ENCODE measurements at regions of chr14 and their contacts with region 1.

Region 1: GRCh38 chr14:30270200-30271161 is 288.5 kb upstream of the G2E3 start:
- DNase-seq: peak; percentile 55
- ATAC-seq: peak; percentile 99
- H3K4me3 ChIP-seq: no peak overlapping the region
- H3K27ac ChIP-seq: no peak overlapping the region
- H3K4me1 ChIP-seq: no peaks in the 10 kb centered on the region
- H3K27me3 ChIP-seq: no peaks in the 10 kb centered on the region
- CTCF ChIP-seq: peak in 2 of 3 experiments; percentile 85 to 93; a peak in 4 of 6 replicates
- POLR2A ChIP-seq: no peak
- RAD21 ChIP-seq: peak; percentile 34; the same call in 1 of the 2 replicates

Region 2: DNA sequence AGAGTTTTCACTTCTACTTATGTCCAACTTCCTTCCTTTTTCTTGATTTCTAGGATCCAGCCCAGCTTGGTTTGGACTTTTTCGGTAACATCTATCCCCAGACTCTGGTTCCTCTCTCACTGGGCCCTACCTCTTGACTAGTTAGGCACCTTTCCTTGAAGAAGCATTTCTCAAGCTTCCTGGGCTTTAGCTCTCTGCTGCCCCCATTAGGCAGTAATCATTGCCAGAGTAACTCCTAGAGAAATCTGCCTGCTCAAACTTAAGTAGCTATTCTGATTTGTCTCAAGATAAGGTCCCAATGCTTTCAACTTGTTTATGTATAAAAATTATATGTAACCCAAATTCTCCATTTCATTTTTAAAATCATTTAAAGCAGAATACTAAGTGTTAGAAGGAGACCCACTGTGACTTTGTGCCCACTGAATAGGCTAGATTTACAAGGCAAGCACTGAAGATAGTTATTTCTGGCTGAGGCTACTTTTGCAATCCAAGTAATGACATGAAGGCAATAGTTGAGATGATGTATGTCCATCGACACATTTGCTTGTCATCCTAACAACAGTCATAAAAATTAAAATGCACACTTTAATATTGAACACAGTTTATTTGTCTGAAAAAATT is 13.5 kb after region 1 on chr14:
- CTCF ChIA-PET with region 1: interaction called, 70 read pairs
- POLR2A ChIA-PET with region 1: interaction called, 3 read pairs
- RAD21 ChIA-PET with region 1: no interaction called
- intact Hi-C with region 1: no loop called
- DNase-seq: peak; percentile 19
- ATAC-seq: peak; percentile 68
- H3K4me3 ChIP-seq: no peak overlapping the region
- H3K27ac ChIP-seq: no peak overlapping the region
- H3K4me1 ChIP-seq: no peaks in the 10 kb centered on the region
- H3K27me3 ChIP-seq: no peaks in the 10 kb centered on the region
- CTCF ChIP-seq: peak; percentile 6 to 84 (median 74); a peak in 4 of 6 replicates
- POLR2A ChIP-seq: no peak
- RAD21 ChIP-seq: peak; percentile 27; the same call in 1 of the 2 replicates

Region 3: DNA sequence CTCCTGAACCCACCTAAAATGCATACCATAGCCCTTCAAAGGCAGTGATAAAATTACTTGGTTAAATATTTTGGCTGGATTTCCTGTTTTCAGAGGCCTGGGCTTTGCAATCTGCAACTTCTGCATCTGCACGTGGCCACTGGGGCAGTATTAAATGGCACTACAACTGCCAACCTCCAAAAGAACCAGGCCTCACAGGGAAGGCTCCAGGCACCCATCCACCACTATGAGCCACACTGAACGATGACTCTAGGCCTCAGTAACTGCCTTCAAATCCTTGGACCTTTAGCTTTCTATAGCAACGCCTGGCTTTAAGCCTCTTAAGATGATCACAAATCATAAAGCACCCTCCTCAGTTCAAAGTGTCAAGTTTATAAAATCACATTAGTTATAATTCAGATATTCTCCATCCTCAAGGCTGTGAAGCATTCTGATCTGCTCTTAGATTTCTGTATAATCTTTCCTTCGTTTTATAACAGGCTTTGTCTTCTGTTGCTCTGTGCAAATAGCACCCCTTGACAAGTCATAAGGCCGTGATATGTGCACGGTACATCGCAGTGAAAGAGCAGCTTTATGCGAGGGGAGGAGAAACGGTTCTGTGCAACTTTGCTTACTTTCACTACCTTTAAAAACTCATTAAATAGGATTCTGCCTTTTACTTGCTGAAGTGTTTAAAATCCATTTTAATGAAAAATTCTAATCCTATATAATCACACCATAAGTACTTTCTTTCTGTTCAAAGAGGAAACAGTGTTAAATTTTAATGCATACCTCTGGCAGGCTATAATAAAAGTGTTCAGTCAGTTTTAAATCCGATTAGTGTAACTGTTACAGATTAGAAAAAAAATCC is 92.1 kb after region 1 on chr14:
- CTCF ChIA-PET with region 1: no interaction called
- POLR2A ChIA-PET with region 1: no interaction called
- RAD21 ChIA-PET with region 1: no interaction called
- intact Hi-C with region 1: no loop called
- DNase-seq: no peak
- ATAC-seq: no peak
- H3K4me3 ChIP-seq: peak overlapping the region; percentile 45 to 57
- H3K27ac ChIP-seq: no peak overlapping the region; the same call in 1 of the 2 replicates
- H3K4me1 ChIP-seq: peaks cover 0 to 3% of the 10 kb centered on the region in 2 experiments; a peak in 1 of 4 replicates
- H3K27me3 ChIP-seq: no peaks in the 10 kb centered on the region
- CTCF ChIP-seq: no peak
- POLR2A ChIP-seq: no peak
- RAD21 ChIP-seq: no peak

Region 4: GRCh38 chr14:30443368-30444007 is 173.0 kb after region 1 on chr14:
- CTCF ChIA-PET with region 1: interaction called, 12 read pairs
- POLR2A ChIA-PET with region 1: no interaction called
- RAD21 ChIA-PET with region 1: interaction called in 1 of 2 experiments, 4 read pairs
- intact Hi-C with region 1: no loop called
- DNase-seq: peak; percentile 16
- ATAC-seq: 0 out of 2 replicates have a peak, but pooled peaks have one; percentile 53
- H3K4me3 ChIP-seq: no peak overlapping the region
- H3K27ac ChIP-seq: no peak overlapping the region
- H3K4me1 ChIP-seq: no peaks in the 10 kb centered on the region
- H3K27me3 ChIP-seq: peaks cover 34% of the 10 kb centered on the region
- CTCF ChIP-seq: peak; percentile 25 to 66 (median 48); a peak in 5 of 6 replicates
- POLR2A ChIP-seq: no peak
- RAD21 ChIP-seq: peak; percentile 63

Region 5: DNA sequence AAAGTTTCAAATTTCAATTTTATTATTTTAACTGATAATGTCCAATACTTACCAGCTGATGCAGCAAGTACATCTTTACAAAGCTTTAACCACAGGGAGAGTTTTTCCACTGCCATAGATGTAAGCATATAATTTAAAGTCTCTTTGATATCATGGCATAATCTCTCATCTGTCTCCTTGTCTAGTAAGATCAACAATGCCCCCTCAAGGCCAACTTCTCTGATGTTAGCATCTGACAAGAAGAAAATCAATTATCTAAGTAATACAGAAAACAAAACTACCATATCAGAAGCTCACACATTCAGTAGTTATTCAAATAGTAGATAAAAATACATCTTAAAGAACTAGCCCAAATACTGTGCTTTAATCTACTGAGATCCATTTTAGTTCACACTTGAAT is 1055.6 kb after region 1 on chr14:
- CTCF ChIA-PET with region 1: no interaction called
- POLR2A ChIA-PET with region 1: no interaction called
- RAD21 ChIA-PET with region 1: no interaction called
- intact Hi-C with region 1: no loop called
- DNase-seq: peak; percentile 15
- ATAC-seq: no peak; the same call in 1 of the 2 replicates
- H3K4me3 ChIP-seq: no peak overlapping the region
- H3K27ac ChIP-seq: no peak overlapping the region
- H3K4me1 ChIP-seq: no peaks in the 10 kb centered on the region
- H3K27me3 ChIP-seq: no peaks in the 10 kb centered on the region
- CTCF ChIP-seq: peak; percentile 21 to 27 (median 26); a peak in 2 of 6 replicates
- POLR2A ChIP-seq: no peak
- RAD21 ChIP-seq: peak; percentile 75